CD4-positive, alpha-beta memory T cell (primary cell): ENCODE measurements at regions of chr3 and their contacts with region 1.

Region 1: GRCh38 chr3:152219216-152219615 is 49.5 kb upstream of the MBNL1 start:
- DNase-seq: no peak
- H3K4me3 ChIP-seq: no peak overlapping the region
- H3K4me3 Mint-ChIP-seq: peak overlapping the region; percentile 9 to 82 (median 40)
- H3K27ac ChIP-seq: no peak overlapping the region
- H3K27ac Mint-ChIP-seq: peak overlapping the region in 6 of 7 donors; percentile 9 to 65 (median 31)
- H3K4me1 ChIP-seq: peaks cover 49% of the 10 kb centered on the region
- H3K4me1 Mint-ChIP-seq: peaks cover 36 to 69% (median 50%) of the 10 kb centered on the region in 4 donors
- H3K27me3 ChIP-seq: no peaks in the 10 kb centered on the region
- H3K27me3 Mint-ChIP-seq: no peaks in the 10 kb centered on the region

Region 2: GRCh38 chr3:152229692-152230091 is 10.5 kb after region 1 on chr3:
- CTCF ChIA-PET with region 1: interaction called, 7 read pairs
- POLR2A ChIA-PET with region 1: interaction called, 4 read pairs
- intact Hi-C with region 1: loop called (anchors 2 kb)
- DNase-seq: no peak
- H3K4me3 ChIP-seq: no peak overlapping the region
- H3K4me3 Mint-ChIP-seq: peak overlapping the region in 2 of 8 donors; percentile 1 to 13
- H3K27ac ChIP-seq: no peak overlapping the region
- H3K27ac Mint-ChIP-seq: peak overlapping the region in 1 of 7 donors; percentile 1
- H3K4me1 ChIP-seq: peaks cover 42% of the 10 kb centered on the region
- H3K4me1 Mint-ChIP-seq: peaks cover 34 to 56% (median 44%) of the 10 kb centered on the region in 4 donors
- H3K27me3 ChIP-seq: no peaks in the 10 kb centered on the region
- H3K27me3 Mint-ChIP-seq: no peaks in the 10 kb centered on the region

Region 3: DNA sequence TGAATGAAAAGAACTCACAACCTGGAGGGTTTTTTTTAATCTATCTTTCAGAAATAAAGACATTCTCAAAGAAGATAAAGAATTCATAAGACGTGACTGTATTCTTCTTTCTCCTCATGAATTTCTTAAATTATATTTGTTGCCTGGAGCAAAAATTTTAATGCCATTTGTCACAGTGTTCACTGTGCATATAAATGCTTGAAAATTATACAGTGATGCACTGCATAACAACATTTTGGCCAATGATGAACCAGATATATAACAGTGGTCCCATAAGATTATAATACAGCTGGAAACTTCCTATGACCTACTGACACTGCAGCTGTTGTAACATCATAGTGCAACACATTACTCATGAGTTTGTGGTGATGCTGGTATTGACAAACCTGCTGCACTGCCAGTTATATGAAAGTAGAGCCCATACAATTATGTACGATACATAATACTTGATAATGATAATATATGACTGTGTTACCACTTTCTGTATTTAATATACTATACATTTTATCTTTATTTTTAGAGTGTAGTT is 683.0 kb after region 1 on chr3:
- CTCF ChIA-PET with region 1: no interaction called
- POLR2A ChIA-PET with region 1: no interaction called
- intact Hi-C with region 1: no loop called
- DNase-seq: no peak
- H3K4me3 ChIP-seq: no peak overlapping the region
- H3K4me3 Mint-ChIP-seq: no peak overlapping the region
- H3K27ac ChIP-seq: no peak overlapping the region
- H3K27ac Mint-ChIP-seq: no peak overlapping the region
- H3K4me1 ChIP-seq: no peaks in the 10 kb centered on the region
- H3K4me1 Mint-ChIP-seq: no peaks in the 10 kb centered on the region
- H3K27me3 ChIP-seq: no peaks in the 10 kb centered on the region
- H3K27me3 Mint-ChIP-seq: no peaks in the 10 kb centered on the region